IMR-90 (cell line): ENCODE measurements at regions of chr7 and their contacts with region 1.

Region 1: DNA sequence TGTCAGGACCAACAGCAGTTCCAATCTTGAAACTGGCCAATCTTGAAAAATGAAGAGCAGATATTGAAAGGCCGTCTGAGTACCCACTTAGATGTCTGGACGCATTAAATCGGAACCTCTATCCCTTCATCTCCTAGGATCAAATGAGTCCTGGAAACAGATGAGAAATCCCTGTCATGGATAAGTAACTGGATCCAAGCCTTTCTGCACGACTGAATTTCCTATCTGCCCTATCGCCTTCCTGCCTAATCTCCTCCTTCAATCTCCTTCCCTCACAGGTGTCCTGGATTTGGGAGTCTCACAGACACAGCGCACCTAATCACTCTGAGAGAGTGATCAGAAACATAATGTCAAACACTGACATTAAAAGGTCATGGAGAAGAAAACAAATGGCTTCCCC is 245.2 kb upstream of the PRSS58 start:
- DNase-seq: no peak
- ATAC-seq: no peak
- H3K4me3 ChIP-seq: no peak overlapping the region
- H3K27ac ChIP-seq: no peak overlapping the region
- H3K4me1 ChIP-seq: peaks cover 6% of the 10 kb centered on the region
- H3K27me3 ChIP-seq: peaks cover 20% of the 10 kb centered on the region
- CTCF ChIP-seq: no peak
- POLR2A ChIP-seq: no peak
- RAD21 ChIP-seq: no peak

Region 2: DNA sequence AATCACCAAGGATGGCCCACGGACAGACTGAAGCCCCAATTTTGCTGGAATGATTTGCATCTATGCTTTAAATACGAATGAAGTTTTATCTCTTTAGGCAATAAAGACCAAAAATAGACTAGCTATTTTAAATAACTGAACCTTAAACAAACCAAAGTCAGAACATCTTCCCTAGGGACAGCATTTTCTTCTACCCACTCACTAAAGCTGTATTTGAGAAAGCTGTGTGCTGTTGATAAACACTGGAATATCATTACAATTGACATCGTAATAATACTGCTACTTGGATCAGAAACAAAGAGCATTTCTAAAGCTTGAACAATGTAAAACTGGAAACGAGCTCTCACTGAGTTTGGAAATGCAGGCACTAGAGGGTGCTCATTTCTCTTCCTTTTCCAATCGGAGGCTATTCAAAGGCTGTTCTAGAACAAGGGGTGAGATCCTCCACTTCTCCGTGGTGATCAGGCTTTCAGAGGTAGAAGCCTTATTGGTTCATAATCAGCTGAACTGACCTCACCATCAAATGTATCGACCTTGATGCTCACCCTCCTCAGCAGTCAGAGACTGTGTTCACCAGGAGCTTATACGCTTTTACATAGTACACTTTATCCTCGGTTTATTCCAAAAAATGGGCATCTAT is 20.9 kb after region 1 on chr7:
- CTCF ChIA-PET with region 1: interaction called, 9 read pairs
- POLR2A ChIA-PET with region 1: no interaction called
- dilution Hi-C with region 1: no loop called
- in situ Hi-C with region 1: no loop called
- intact Hi-C with region 1: loop called (anchors 2 kb)
- DNase-seq: no peak
- ATAC-seq: peak; percentile 72
- H3K4me3 ChIP-seq: no peak overlapping the region
- H3K27ac ChIP-seq: no peak overlapping the region
- H3K4me1 ChIP-seq: no peaks in the 10 kb centered on the region
- H3K27me3 ChIP-seq: peaks cover 20% of the 10 kb centered on the region
- CTCF ChIP-seq: peak; percentile 22; the same call in 1 of the 2 replicates
- POLR2A ChIP-seq: no peak
- RAD21 ChIP-seq: no peak